Spleen (tissue), 13 donors: ENCODE measurements at regions of chr2 and their contacts with region 1.

Region 1: DNA sequence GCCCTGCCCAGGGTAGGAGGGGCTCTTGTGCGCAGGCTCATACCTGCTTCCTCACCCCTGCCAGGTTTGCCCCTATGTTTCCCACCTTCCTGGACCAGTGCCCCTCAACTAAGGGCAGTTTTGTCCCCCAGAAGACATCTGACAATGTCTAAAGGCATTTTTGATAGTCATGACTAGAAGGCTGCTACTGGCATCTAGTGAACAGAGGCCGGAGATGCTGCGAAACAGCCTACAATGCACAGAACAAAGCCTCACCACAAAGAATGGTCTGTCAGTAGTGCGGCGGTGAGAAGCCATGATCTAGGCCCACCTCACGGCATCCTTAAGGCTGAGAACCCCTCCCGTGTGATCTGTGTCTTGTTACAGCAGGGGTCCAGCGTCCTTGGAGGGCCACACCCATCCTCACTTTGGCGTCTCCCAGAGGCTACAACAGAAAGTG is 96.0 kb downstream of the TMEM17 start:
- DNase-seq: no peak
- H3K4me3 ChIP-seq: no peak overlapping the region
- H3K27ac ChIP-seq: peak overlapping the region in 1 of 8 donors; percentile 75
- H3K4me1 ChIP-seq: peaks cover 4 to 25% (median 19%) of the 10 kb centered on the region in 6 donors
- H3K27me3 ChIP-seq: no peaks in the 10 kb centered on the region
- CTCF ChIP-seq: peak in 1 of 11 experiments; percentile 22
- POLR2A ChIP-seq: no peak

Region 2: DNA sequence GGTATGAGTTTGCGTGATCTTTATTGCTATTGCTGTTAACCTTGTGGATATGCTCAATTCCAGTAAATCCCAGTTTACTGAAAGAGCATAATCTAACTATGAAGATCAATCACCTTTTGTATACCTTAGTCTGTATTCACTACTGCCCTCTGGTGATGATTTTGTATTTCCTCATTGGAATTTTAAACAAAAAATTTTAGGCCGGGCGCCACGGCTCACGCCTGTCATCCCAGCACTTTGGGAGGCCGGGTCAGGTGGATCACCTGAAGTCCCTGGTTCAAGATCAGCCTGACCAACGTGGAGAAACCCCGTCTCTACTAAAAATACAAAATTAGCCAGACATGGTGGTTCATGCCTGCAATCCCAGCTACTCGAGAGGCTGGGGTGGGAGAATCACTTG is 499.4 kb before region 1 on chr2:
- intact Hi-C with region 1: loop called (anchors 5 kb)
- DNase-seq: no peak
- H3K4me3 ChIP-seq: no peak overlapping the region
- H3K27ac ChIP-seq: no peak overlapping the region
- H3K4me1 ChIP-seq: peaks cover 0 to 49% (median 17%) of the 10 kb centered on the region in 6 donors
- H3K27me3 ChIP-seq: no peaks in the 10 kb centered on the region
- CTCF ChIP-seq: no peak
- POLR2A ChIP-seq: no peak

Region 3: DNA sequence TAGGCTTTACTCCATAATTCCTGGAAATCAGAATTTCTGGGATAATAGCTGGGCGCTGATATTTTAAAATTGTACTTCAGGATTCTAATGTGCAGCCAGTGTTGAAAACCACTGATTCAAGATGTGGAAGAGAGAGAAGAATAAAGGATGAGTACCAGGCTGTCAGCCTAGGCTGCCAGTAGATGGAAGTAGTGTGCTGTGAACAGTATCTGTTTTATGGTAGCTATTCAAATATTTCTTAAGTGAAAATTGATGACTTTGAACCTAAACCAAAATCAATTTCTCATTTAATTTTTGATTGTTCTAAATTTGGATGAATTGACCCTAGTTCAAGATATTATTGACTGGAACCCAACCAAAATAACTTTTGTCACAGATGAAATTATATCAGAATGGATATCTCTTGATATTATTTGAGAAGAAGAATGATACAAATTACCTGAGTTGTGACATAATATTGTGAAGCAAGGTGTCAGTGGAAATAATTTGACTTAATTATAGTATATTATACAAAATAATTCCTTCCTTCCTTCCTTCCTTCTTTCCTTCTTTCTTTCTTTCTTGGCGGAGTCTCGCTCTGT is 416.5 kb before region 1 on chr2:
- intact Hi-C with region 1: loop called (anchors 5 kb)
- DNase-seq: no peak
- H3K4me3 ChIP-seq: no peak overlapping the region
- H3K27ac ChIP-seq: no peak overlapping the region
- H3K4me1 ChIP-seq: peaks cover 0 to 25% (median 6%) of the 10 kb centered on the region in 6 donors
- H3K27me3 ChIP-seq: no peaks in the 10 kb centered on the region
- CTCF ChIP-seq: peak in 10 of 11 experiments; percentile 29 to 68 (median 54)
- POLR2A ChIP-seq: no peak

Region 4: DNA sequence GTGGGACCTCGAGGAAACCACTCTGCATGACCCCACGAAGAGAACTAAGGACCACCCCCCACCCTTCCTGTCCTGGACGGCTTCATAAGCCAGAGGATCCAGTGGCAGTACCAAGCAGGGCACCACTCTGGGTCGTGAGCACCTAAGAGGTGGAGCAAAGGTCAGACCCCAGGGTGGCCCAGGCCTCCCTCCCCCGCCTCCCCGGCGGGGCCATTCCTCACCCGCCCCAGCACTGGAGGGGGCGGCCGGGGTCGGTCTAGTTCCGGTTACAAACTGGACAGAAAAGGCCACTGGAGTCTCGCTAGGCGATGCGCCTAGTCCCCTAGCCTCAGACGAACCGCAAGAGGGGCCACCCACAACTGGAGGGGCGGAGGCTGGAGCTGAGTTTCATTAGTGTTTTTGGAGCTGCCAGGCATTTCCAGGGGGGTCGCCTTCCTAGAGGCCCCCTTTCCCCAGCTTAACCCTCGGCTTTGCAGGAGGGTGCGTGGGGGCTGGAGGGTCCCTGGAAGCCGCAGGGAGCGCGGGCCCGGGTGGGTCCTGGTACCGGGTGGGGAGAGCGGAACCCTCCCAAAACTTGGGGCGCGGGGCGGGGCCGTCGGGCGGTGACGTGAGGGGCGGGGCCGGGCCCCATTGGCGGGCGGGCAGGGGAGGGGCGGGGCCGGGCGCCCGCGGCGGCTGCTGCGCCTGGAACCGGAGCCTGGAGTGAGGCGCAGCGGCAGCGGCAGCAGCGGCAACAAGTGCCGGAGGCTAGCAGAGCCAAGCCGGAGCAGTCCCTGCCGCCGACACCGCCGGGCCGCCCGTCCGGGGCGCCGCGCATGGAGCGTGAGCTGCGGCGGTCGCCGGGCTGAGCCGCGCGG is 214.4 kb before region 1 on chr2 and contains the start of gene B3GNT2:
- intact Hi-C with region 1: loop called (anchors 5 kb)
- DNase-seq: peak; percentile 96
- H3K4me3 ChIP-seq: peak within 1 kb of the TSS; percentile 85 to 98 (median 92)
- H3K27ac ChIP-seq: peak within 1 kb of the TSS; percentile 90 to 99 (median 96)
- H3K4me1 ChIP-seq: peaks cover 32 to 56% (median 45%) of the 10 kb centered on the region in 6 donors
- H3K27me3 ChIP-seq: no peaks in the 10 kb centered on the region
- CTCF ChIP-seq: no peak
- POLR2A ChIP-seq: peak in 2 of 3 donors; percentile 31 to 69
- total RNA-seq, gene B3GNT2: 21.3 to 40.3 (median 28.9) TPM

Region 5: GRCh38 chr2:62641410-62641843 is 231.4 kb after region 1 on chr2:
- intact Hi-C with region 1: no loop called
- DNase-seq: no peak
- H3K4me3 ChIP-seq: no peak overlapping the region
- H3K27ac ChIP-seq: peak overlapping the region in 1 of 8 donors; percentile 19
- H3K4me1 ChIP-seq: peaks cover 0 to 20% (median 9%) of the 10 kb centered on the region in 6 donors
- H3K27me3 ChIP-seq: no peaks in the 10 kb centered on the region
- CTCF ChIP-seq: no peak
- POLR2A ChIP-seq: no peak